ENCODE measurements at regions of chr7 and their contacts with region 1.

Region 1: GRCh38 chr7:38335492-38336147 is 62.2 kb upstream of the TARP start:
- H3K4me3 ChIP-seq: no peak overlapping the region
- H3K27ac ChIP-seq: no peak overlapping the region
- H3K4me1 ChIP-seq: no peaks in the 10 kb centered on the region
- CTCF ChIP-seq: peak; percentile 77

Region 2: GRCh38 chr7:38195804-38196595 is 139.6 kb before region 1 on chr7:
- CTCF ChIA-PET with region 1: interaction called, 21 read pairs
- POLR2A ChIA-PET with region 1: interaction called, 3 read pairs
- H3K4me3 ChIP-seq: no peak overlapping the region
- H3K27ac ChIP-seq: no peak overlapping the region
- H3K4me1 ChIP-seq: peaks cover 15% of the 10 kb centered on the region
- CTCF ChIP-seq: no peak

Region 3: GRCh38 chr7:38274486-38274885 is 61.1 kb before region 1 on chr7:
- CTCF ChIA-PET with region 1: interaction called, 12 read pairs
- POLR2A ChIA-PET with region 1: no interaction called
- H3K4me3 ChIP-seq: no peak overlapping the region
- H3K27ac ChIP-seq: no peak overlapping the region
- H3K4me1 ChIP-seq: no peaks in the 10 kb centered on the region
- CTCF ChIP-seq: no peak

Region 4: GRCh38 chr7:38299275-38299931 is 36.2 kb before region 1 on chr7:
- CTCF ChIA-PET with region 1: interaction called, 14 read pairs
- POLR2A ChIA-PET with region 1: no interaction called
- H3K4me3 ChIP-seq: no peak overlapping the region
- H3K27ac ChIP-seq: no peak overlapping the region
- H3K4me1 ChIP-seq: no peaks in the 10 kb centered on the region
- CTCF ChIP-seq: no peak

Region 5: DNA sequence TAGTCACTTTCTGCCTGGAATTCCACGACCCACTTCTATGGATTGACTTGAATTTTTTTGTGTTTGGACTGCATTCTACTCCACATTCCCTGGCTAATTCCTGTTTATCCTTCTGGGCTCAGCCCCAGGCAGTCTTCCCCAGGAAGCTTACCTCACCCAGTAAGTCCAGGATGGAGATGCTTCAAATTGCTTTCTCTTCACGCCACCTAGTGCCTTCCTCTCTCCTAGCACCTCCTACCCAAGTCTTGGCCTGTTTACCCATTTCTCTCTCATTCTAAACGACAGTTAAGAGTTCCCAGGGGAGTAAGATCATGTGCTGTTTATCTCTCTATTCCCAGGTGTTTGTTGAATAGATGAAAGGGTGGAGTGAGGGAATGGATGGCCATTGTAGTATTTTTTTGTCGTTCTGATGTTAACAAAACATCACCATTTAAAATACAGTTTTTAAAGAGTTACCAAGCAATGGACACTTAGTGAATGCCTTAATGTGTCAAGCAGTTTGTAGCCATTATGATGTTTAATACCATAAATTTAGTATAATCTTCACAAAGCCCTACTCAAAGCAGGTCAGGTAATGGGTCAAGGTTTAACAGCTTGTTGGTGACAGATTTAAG is 16.7 kb before region 1 on chr7:
- CTCF ChIA-PET with region 1: interaction called, 67 read pairs
- POLR2A ChIA-PET with region 1: interaction called, 3 read pairs
- H3K4me3 ChIP-seq: no peak overlapping the region
- H3K27ac ChIP-seq: no peak overlapping the region
- H3K4me1 ChIP-seq: no peaks in the 10 kb centered on the region; the same call in 1 of the 2 replicates
- CTCF ChIP-seq: peak; percentile 75

Region 6: GRCh38 chr7:38369816-38370493 is 34.3 kb after region 1 on chr7:
- CTCF ChIA-PET with region 1: interaction called, 27 read pairs
- POLR2A ChIA-PET with region 1: no interaction called
- H3K4me3 ChIP-seq: no peak overlapping the region
- H3K27ac ChIP-seq: no peak overlapping the region
- H3K4me1 ChIP-seq: no peaks in the 10 kb centered on the region
- CTCF ChIP-seq: no peak